T-cell (primary cell): ENCODE measurements at regions of chr4 and their contacts with region 1.

Region 1: GRCh38 chr4:148288448-148288847 is 153.8 kb downstream of the NR3C2 start:
- DNase-seq: no peak
- ATAC-seq: no peak
- H3K4me3 ChIP-seq: no peak overlapping the region
- H3K4me3 Mint-ChIP-seq: no peak overlapping the region
- H3K27ac ChIP-seq: no peak overlapping the region
- H3K27ac Mint-ChIP-seq: no peak overlapping the region
- H3K4me1 ChIP-seq: no peaks in the 10 kb centered on the region
- H3K4me1 Mint-ChIP-seq: peaks cover 39 to 66% (median 61%) of the 10 kb centered on the region in 3 donors
- H3K27me3 ChIP-seq: no peaks in the 10 kb centered on the region
- H3K27me3 Mint-ChIP-seq: no peaks in the 10 kb centered on the region

Region 2: GRCh38 chr4:148300877-148301276 is 12.4 kb after region 1 on chr4:
- CTCF ChIA-PET with region 1: no interaction called
- POLR2A ChIA-PET with region 1: no interaction called
- DNase-seq: no peak
- ATAC-seq: no peak
- H3K4me3 ChIP-seq: no peak overlapping the region
- H3K4me3 Mint-ChIP-seq: no peak overlapping the region
- H3K27ac ChIP-seq: no peak overlapping the region
- H3K27ac Mint-ChIP-seq: no peak overlapping the region
- H3K4me1 ChIP-seq: no peaks in the 10 kb centered on the region
- H3K4me1 Mint-ChIP-seq: peaks cover 18 to 36% (median 29%) of the 10 kb centered on the region in 3 donors
- H3K27me3 ChIP-seq: no peaks in the 10 kb centered on the region
- H3K27me3 Mint-ChIP-seq: no peaks in the 10 kb centered on the region

Region 3: GRCh38 chr4:148376151-148376550 is 87.7 kb after region 1 on chr4:
- CTCF ChIA-PET with region 1: no interaction called
- POLR2A ChIA-PET with region 1: interaction called in 1 of 2 experiments, 10 read pairs
- DNase-seq: peak; percentile 12 to 82 (median 55)
- ATAC-seq: peak; percentile 78 to 96 (median 93)
- H3K4me3 ChIP-seq: peak overlapping the region in 1 of 2 donors; percentile 20
- H3K4me3 Mint-ChIP-seq: peak overlapping the region; percentile 63 to 80 (median 66)
- H3K27ac ChIP-seq: peak overlapping the region; percentile 58
- H3K27ac Mint-ChIP-seq: peak overlapping the region; percentile 87 to 89
- H3K4me1 ChIP-seq: peaks cover 0 to 7% of the 10 kb centered on the region in 2 experiments
- H3K4me1 Mint-ChIP-seq: peaks cover 38 to 48% (median 42%) of the 10 kb centered on the region in 3 donors
- H3K27me3 ChIP-seq: no peaks in the 10 kb centered on the region
- H3K27me3 Mint-ChIP-seq: no peaks in the 10 kb centered on the region